Dorsolateral prefrontal cortex (tissue), 120 donors: ENCODE measurements at regions of chrX and their contacts with region 1.

Region 1: GRCh38 chrX:9352694-9353411 is 112.0 kb upstream of the TBL1X start:
- DNase-seq: peak in 1 of 10 donors; percentile 47
- H3K4me3 ChIP-seq: peak overlapping the region in 4 of 59 donors; percentile 5 to 28 (median 20)
- H3K27ac ChIP-seq: peak overlapping the region in 5 of 59 donors; percentile 9 to 48 (median 22)
- H3K27me3 ChIP-seq: peaks cover 0 to 66% (median 5%) of the 10 kb centered on the region in 45 donors
- CTCF ChIP-seq: no peak

Region 2: DNA sequence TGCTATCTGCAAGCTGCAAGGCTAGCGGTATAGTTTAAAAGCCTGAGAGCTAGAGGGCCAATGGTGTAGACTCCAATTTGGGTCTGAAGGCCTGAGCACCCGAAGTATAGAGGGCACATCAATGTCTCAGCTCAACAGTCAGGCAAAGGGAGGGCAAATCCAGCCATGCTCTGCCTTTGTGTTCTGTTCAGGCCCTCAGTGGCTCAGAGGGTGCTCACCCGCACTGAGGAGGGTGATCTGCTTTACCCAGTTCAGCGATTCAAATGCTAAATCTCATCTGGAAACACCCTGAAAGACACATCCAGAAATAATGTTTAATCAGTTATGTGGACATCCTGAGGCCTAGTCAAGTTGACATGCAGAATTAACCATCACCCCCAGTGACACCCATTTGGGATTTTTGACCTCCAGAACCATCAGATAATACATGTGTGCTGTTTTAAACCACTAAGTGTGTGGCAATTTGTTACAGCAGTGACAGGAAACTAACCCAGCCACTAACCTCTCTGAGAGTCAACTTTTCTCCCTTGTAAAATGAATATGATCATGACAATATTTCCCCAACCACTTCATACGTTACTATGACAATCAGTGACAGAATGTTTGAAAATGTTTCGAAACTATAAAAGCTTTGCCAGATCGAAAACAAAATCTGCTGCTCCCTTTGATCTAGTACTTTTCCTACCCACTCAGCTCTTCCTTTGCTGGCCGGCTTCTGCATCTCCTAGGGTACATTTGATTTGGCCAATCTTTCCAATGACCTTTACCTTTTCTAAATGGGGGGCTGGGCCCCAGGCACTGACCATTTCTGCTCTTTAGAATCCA is 103.6 kb after region 1 on chrX:
- intact Hi-C with region 1: loop called in 1 of 2 experiments (anchors 5 kb)
- DNase-seq: no peak
- H3K4me3 ChIP-seq: no peak overlapping the region
- H3K27ac ChIP-seq: no peak overlapping the region
- H3K27me3 ChIP-seq: peaks cover 0 to 57% (median 9%) of the 10 kb centered on the region in 45 donors
- CTCF ChIP-seq: no peak